AG04450 (cell line): ENCODE measurements at regions of chr13 and their contacts with region 1.

Region 1: DNA sequence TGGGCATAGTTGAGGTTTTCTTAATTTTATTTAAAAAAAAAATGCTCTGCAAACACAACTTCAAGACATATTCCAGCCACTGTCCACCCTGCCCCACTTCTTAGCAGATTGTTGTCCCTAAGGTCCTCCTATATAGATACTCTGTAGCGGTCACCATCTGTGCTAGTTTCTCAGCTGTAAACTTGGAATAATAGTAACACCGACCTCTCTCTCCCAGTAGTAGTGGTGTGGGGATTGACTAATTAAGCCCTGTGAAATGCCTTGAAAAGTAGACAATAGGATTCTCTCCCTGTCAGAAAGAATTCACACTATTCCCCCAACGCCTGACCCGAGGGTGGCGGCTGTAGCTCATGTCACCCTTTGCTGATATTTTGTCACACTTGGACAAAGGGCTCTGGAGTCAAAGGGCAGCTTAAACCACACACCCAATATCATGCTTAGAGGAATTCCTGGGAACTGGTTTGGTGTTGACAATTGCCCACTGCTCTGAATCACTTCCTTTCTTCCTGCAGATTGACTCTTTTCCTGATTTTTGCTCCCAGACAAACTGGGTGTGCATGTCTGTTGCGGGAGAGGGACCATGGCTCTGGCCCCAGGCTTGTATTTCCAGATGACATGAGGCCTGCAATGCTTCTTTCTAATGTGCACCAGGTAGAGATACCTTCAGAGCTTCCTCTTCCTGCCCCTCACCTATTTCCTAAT is 9.1 kb upstream of the SERP2 start:
- DNase-seq: no peak
- H3K4me3 ChIP-seq: no peak overlapping the region
- H3K27ac ChIP-seq: no peak overlapping the region
- H3K27me3 ChIP-seq: no peaks in the 10 kb centered on the region
- CTCF ChIP-seq: no peak

Region 2: DNA sequence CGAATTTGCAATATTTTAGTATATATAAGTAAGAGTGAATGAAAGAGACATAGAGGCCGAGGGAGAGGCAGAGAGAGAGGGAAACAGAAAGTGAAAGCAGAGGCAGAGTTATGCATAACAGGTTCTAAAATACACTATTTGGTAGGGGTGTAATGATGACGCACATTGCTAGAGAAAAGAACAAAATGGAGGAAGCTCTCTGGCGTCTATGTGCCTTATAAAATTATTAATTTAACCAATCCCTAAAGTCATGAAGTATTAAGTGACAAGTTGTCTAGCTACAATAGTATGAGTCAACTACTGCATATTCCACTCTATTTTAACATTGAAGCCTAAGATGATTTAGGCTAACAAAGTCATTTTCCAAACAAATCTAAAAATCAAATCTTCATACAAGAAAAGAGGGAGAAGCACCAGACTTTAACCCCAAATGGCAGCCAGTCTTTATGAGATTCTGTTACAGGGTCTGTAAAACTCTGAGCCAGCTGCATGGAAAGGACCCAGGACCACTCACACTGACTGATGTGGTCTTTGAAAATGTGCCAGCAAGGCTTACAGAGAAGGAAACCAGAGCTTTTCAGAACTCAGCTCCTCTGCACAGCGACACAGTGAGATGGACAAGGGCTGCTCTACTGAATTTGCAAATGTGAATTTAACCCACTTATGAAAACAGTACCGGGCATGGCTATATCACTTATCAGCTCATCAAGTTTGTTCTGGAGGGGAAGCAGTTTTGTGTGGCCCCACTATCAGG is 89.9 kb before region 1 on chr13:
- CTCF ChIA-PET with region 1: interaction called, 12 read pairs
- POLR2A ChIA-PET with region 1: no interaction called
- DNase-seq: peak; percentile 45
- H3K4me3 ChIP-seq: peak overlapping the region; percentile 35
- H3K27ac ChIP-seq: peak overlapping the region; percentile 34
- H3K27me3 ChIP-seq: no peaks in the 10 kb centered on the region
- CTCF ChIP-seq: no peak